H1 (cell line): ENCODE measurements at regions of chr19 and their contacts with region 1.

Region 1: DNA sequence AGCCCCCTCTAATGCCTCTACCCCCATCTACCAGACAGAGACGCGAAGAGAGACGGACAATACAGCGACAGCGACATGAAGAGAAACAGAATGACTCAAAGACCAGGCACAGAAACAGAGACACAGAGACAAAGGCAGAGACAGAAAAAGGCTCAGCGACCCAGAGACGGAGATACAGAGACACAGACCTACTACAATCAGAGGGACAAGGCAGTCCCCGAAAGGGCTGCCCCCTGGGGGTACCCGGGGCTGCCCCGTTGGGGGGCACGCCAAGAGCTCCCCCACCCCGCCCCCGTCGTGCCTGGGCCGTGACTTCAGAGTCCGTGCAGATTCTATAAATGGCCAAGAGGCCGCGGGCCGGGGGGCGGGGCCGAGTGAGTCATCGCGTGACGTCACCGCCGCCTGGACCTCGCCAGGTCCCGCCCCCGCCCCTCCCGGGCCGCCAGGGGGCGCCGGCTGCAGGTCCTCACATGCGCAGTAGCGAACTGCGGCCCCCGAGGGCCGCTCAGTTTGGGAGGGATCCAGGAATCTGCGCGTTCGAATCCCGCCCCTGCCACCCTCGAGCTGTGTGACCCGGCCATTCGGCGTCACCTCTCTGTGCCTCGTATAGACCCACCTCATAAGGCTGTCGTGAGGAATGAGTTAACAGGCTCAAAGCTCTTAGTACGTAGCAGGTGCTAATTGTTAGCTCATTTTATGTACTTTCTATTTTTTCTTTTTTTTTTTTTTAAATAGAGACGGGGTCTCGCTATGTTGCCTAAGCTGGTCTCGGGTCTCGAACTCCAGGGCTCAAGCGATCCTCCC is 2.7 kb upstream of the CNN1 start:
- DNase-seq: peak; percentile 71 to 98
- H3K4me3 ChIP-seq: peak overlapping the region; percentile 36 to 63 (median 40)
- H3K27ac ChIP-seq: peak overlapping the region; percentile 46; the same call in 1 of the 2 replicates
- H3K4me1 ChIP-seq: peaks cover 4 to 20% (median 18%) of the 10 kb centered on the region in 4 experiments
- H3K27me3 ChIP-seq: no peaks in the 10 kb centered on the region; a peak in 1 of 7 replicates
- CTCF ChIP-seq: peak; percentile 75 to 86 (median 79)
- EP300 ChIP-seq: no peak
- POLR2A ChIP-seq: peak in 1 of 2 experiments; percentile 80; a peak in 1 of 3 replicates
- RAD21 ChIP-seq: peak in 1 of 2 experiments; percentile 47; a peak in 1 of 4 replicates

Region 2: DNA sequence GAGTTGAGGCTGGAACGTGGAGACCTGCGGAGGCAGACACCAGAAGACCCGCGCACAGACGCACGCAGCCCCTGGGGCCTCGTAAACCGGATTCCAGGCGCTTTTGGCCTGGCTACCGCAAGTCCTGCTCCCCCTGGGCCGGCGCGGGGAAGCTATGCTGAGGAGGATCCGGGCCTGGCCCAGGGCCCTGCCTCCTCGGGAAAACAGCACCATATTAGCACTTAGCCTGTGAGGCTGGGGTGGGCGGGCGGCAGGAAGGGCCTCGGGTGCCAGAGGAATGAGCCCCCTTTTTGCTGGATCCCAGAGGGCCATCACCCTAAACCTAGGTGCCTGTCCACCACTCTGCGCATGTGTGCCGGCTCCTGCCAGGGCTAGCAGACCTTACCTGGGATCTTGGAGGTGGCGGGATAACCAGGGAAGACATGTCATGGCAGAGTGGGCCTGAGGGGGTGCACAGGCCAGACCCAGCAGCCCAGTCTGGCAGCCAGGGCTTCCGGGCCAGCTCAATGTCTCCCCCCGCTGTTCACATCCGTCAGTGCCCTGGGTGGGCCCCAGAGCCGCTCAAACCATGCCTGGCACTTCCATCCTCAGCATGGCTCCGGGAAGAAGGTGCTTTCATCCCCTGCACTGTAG is 15.7 kb after region 1 on chr19:
- CTCF ChIA-PET with region 1: interaction called, 19 read pairs
- POLR2A ChIA-PET with region 1: interaction called, 4 read pairs
- DNase-seq: peak in 1 of 2 experiments; percentile 83
- H3K4me3 ChIP-seq: no peak overlapping the region
- H3K27ac ChIP-seq: no peak overlapping the region
- H3K4me1 ChIP-seq: 0 out of 7 replicates have a peak, but pooled peaks cover 0 to 4% (median 0%) of the 10 kb centered on the region in 4 experiments
- H3K27me3 ChIP-seq: no peaks in the 10 kb centered on the region
- CTCF ChIP-seq: peak; percentile 91 to 96 (median 94)
- EP300 ChIP-seq: no peak
- POLR2A ChIP-seq: no peak
- RAD21 ChIP-seq: peak; percentile 73 to 83